MCF 10A (cell line): ENCODE measurements at regions of chr2 and their contacts with region 1.

Region 1: DNA sequence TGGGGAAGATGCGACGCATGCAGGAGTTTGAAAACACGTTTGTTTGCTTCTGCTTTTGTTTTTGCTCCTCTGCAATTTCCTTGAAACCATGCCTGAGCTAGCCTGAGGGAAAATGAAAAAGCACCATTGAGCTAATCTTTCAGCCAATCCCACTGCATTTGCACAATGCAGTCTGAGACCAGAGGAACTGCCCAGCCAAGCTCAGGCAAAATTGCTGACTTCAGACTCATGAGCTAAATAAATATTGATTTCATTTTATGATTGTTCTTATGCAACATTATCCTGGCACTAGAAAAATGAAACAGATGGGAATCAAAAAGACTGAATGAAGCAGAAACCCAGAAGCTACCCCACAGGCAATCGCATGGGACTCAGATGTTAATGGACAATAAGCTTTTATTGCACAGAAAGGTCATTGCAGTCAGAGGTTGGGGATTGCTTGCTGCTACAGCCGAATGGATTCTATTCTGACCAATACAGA is 37.0 kb downstream of the TPRKB start:
- DNase-seq: no peak
- H3K4me3 Mint-ChIP-seq: no peak overlapping the region
- H3K27ac Mint-ChIP-seq: no peak overlapping the region
- H3K4me1 Mint-ChIP-seq: no peaks in the 10 kb centered on the region
- H3K27me3 Mint-ChIP-seq: peaks cover 10% of the 10 kb centered on the region
- CTCF ChIP-seq: no peak

Region 2: DNA sequence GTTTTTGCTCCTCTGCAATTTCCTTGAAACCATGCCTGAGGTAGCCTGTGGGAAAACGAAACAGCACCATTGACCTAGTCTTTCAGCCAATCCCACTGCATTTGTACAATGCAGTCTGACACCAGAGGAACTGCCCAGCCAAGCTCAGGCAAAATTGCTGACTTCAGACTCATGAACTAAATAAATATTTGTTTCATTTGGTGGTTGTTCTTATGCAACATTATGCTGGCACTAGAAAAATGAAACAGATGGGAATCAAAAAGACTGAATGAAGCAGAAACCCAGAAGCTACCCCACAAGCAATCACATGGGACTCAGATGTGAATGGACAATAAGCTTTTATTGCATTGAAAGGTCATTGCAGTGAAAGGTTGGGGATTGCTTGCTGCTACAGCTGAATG is 59.7 kb before region 1 on chr2:
- CTCF ChIA-PET with region 1: no interaction called
- POLR2A ChIA-PET with region 1: interaction called, 3 read pairs
- intact Hi-C with region 1: loop called (anchors 2 kb)
- DNase-seq: peak; percentile 11
- H3K4me3 Mint-ChIP-seq: no peak overlapping the region
- H3K27ac Mint-ChIP-seq: no peak overlapping the region
- H3K4me1 Mint-ChIP-seq: no peaks in the 10 kb centered on the region
- H3K27me3 Mint-ChIP-seq: peaks cover 20% of the 10 kb centered on the region
- CTCF ChIP-seq: no peak